Right ventricle myocardium inferior (tissue), 1 donor: ENCODE measurements at regions of chr17 and their contacts with region 1.

Region 1: DNA sequence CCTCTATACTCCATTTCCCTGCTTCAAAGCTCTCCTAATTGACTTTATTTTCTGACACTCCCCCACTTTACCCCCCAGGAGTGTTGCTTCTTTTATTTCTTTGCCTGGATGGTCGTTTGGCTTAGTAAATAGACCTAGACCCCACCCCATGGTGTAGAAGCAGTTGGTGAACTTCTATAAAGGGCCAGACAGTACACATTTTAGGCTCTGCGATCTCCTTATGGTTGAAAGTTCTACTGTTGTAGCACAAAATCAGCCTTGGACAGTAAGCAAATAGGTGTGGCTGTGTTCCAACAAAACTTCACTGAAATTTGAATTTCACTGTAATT is 31.9 kb downstream of the ZNF287 start:
- DNase-seq: no peak
- ATAC-seq: no peak

Region 2: DNA sequence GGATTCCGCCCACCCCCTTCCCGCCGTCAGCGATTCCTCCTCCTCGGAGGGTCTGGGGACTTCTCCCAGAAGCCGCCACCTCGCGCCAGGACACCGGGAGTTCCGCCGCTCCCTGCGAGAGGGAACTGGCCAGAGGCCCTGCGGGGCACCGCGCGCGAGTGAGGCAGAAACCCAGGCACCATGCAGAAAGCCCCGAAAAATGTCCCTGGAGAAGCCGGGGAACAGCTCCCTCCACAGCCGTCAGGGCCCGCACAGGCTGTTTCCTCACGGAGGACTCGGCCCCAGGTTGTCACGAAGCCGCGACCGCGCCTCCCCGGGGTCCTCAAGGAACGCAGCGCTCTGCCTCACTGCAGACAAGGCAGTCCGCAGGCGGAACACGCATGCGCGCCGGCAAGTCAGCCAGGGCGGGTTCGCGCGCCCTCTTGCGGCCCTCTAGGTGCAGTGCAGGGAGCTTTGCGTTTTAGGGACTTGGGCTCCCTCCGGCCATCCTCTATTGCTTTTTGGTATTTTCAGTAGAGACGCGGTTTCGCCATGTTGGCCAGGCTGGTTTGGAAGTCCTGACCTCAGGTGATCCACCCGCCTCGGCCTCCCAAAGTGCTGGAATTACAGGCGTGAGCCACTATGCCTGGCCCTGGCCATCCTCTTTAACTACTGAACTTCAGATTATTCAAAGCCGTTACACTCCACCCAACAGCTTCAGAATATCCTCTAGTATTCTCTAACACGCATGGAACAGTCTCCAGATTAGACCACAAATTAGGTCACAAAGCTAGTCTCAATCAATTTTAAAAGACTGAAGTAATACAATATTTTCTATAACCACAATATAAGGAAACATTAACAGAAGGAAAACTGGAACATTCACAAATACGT is 52.2 kb after region 1 on chr17:
- intact Hi-C with region 1: loop called (anchors 2 kb)
- DNase-seq: peak; percentile 97
- ATAC-seq: peak; percentile 89

Region 3: GRCh38 chr17:16653209-16654041 is 116.3 kb after region 1 on chr17 and contains the start of gene ZNF624:
- intact Hi-C with region 1: loop called (anchors 2 kb)
- DNase-seq: peak; percentile 98
- ATAC-seq: peak; percentile 99
- total RNA-seq, gene ZNF624: 2.0 TPM

Region 4: DNA sequence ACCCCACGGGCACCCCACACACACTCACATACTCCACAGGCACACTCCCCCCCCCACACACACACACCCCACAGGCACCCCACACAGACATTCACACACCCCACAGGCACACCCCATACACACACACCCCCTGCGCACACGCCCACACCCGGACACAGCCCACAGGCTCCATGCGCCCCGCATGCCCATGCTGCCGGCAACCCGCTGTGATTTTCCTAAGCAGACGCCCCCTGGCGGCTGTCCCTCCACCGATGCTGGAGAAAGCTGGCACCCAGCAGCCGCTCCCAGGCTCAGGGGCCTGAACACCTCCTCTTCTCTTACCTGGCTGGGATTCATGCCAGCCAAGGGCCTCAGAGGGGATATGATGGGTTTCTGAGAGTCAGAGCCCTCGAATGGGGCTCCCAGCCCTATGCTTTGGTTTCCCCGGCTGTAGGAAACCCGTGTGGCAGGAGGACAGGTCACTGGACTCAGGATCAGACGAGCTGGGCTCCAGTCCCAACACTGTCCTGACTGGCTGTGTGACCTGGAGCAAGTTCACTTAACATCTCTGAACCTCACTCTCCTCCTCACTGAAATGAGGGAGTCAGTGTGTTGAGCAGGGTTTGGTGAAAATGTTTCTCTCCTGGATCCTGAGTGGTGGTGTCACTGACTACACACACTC is 454.4 kb after region 1 on chr17:
- intact Hi-C with region 1: loop called (anchors 5 kb)
- DNase-seq: peak; percentile 94
- ATAC-seq: peak; percentile 43